ENCODE measurements at regions of chr4 and their contacts with region 1.

Region 1: DNA sequence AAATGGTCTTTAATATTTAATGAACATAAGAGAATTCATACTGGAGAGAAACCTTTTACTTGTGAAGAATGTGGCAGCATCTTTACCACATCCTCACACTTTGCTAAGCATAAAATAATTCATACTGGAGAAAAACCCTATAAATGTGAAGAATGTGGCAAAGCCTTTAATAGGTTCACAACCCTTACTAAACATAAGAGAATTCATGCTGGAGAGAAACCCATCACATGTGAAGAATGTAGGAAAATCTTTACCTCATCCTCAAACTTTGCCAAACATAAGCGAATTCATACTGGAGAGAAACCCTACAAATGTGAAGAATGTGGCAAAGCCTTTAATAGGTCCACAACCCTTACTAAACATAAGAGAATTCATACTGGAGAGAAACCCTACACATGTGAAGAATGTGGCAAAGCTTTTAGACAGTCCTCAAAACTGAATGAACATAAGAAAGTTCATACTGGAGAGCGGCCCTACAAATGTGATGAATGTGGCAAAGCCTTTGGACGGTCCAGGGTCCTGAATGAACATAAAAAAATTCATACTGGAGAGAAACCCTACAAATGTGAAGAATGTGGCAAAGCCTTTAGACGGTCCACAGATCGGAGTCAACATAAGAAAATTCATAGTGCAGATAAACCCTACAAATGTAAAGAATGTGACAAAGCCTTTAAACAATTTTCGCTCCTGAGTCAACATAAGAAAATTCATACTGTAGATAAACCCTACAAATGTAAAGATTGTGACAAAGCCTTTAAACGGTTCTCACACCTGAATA is 35.6 kb downstream of the ZNF141 start:
- DNase-seq: no peak
- ATAC-seq: no peak
- H3K4me3 ChIP-seq: peak overlapping the region in 1 of 2 donors; percentile 32
- H3K4me3 Mint-ChIP-seq: no peak overlapping the region
- H3K27ac ChIP-seq: no peak overlapping the region
- H3K27ac Mint-ChIP-seq: no peak overlapping the region
- H3K4me1 ChIP-seq: no peaks in the 10 kb centered on the region
- H3K4me1 Mint-ChIP-seq: no peaks in the 10 kb centered on the region
- H3K27me3 ChIP-seq: no peaks in the 10 kb centered on the region
- H3K27me3 Mint-ChIP-seq: no peaks in the 10 kb centered on the region

Region 2: GRCh38 chr4:508675-509638 is 135.7 kb after region 1 on chr4:
- CTCF ChIA-PET with region 1: interaction called in 1 of 2 experiments, 10 read pairs
- POLR2A ChIA-PET with region 1: no interaction called
- DNase-seq: no peak
- ATAC-seq: peak in 3 of 4 experiments; percentile 28 to 68 (median 46)
- H3K4me3 ChIP-seq: no peak overlapping the region
- H3K4me3 Mint-ChIP-seq: no peak overlapping the region
- H3K27ac ChIP-seq: no peak overlapping the region
- H3K27ac Mint-ChIP-seq: peak overlapping the region; percentile 56 to 68
- H3K4me1 ChIP-seq: peaks cover 6 to 9% of the 10 kb centered on the region in 2 experiments
- H3K4me1 Mint-ChIP-seq: peaks cover 23 to 29% (median 27%) of the 10 kb centered on the region in 3 donors
- H3K27me3 ChIP-seq: no peaks in the 10 kb centered on the region
- H3K27me3 Mint-ChIP-seq: no peaks in the 10 kb centered on the region

Region 3: DNA sequence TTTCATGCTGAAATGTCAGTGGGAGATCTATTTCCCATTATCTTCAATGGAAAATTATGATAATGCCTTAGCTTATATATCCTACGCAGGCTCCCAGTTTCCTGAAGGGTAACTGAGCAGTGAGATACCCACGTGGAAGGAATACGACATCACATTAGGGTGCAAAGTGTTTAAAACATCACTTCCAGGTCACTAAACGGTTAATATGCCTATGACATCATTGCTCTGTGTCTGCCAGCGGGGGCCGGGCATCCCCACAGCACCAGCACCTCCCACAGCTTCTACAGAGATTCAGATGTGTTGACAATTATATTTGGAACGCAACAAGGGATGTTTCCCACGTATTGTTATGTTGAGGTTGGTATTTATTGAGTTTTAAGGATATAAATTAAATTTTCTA is 175.7 kb after region 1 on chr4:
- CTCF ChIA-PET with region 1: no interaction called
- POLR2A ChIA-PET with region 1: no interaction called
- DNase-seq: no peak
- ATAC-seq: no peak
- H3K4me3 ChIP-seq: no peak overlapping the region
- H3K4me3 Mint-ChIP-seq: no peak overlapping the region
- H3K27ac ChIP-seq: no peak overlapping the region
- H3K27ac Mint-ChIP-seq: no peak overlapping the region
- H3K4me1 ChIP-seq: no peaks in the 10 kb centered on the region
- H3K4me1 Mint-ChIP-seq: no peaks in the 10 kb centered on the region
- H3K27me3 ChIP-seq: peaks cover 0 to 15% of the 10 kb centered on the region in 2 experiments
- H3K27me3 Mint-ChIP-seq: peaks cover 18 to 26% of the 10 kb centered on the region in 2 donors

Measured in T-cell (primary cell).